ENCODE measurements at regions of chr13 and their contacts with region 1.

Region 1: GRCh38 chr13:30334663-30335386 is 27.5 kb upstream of the KATNAL1 start:
- DNase-seq: peak in 1 of 10 donors; percentile 31

Region 2: DNA sequence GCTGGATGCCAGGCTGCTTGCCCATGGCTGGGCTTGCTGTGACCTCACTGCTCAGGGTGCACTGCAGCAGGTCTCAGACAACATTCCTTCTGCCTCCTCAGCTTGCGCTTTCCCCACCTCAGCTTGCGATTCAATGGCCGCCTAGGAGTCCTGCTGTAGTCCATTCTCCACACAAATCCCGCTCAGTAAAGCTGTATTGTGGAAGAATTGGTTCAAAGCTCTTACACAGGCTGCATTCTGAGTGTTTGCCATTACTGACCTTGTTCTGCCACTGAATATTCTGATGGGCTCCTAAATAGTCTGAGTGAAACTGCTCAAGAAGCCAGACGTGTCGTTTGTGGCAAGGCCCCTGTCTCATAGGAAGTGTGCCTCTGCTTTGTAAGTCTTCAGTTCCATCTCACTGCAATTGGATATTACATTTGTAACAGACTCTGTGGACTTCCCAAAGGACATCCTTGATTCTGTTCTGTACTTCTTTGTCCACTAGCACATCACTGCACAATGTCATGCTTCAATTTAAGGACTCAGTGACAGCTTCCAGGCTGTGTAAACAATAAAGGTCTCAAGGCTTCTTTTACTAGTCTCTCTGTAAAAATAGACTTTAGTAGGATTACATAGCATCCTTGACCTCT is 77.2 kb before region 1 on chr13:
- intact Hi-C with region 1: loop called (anchors 2 kb)
- DNase-seq: peak in 4 of 10 donors; percentile 16 to 63 (median 25)

Measured in posterior cingulate gyrus (tissue), 11 donors.